ENCODE measurements at regions of chr2 and their contacts with region 1.

Region 1: GRCh38 chr2:12555012-12555645 is 161.6 kb upstream of the TRIB2 start:
- DNase-seq: peak; percentile 52
- H3K4me3 Mint-ChIP-seq: peak overlapping the region; percentile 5
- H3K27ac Mint-ChIP-seq: peak overlapping the region; percentile 86
- H3K4me1 Mint-ChIP-seq: peaks cover 35% of the 10 kb centered on the region
- H3K27me3 Mint-ChIP-seq: no peaks in the 10 kb centered on the region

Region 2: DNA sequence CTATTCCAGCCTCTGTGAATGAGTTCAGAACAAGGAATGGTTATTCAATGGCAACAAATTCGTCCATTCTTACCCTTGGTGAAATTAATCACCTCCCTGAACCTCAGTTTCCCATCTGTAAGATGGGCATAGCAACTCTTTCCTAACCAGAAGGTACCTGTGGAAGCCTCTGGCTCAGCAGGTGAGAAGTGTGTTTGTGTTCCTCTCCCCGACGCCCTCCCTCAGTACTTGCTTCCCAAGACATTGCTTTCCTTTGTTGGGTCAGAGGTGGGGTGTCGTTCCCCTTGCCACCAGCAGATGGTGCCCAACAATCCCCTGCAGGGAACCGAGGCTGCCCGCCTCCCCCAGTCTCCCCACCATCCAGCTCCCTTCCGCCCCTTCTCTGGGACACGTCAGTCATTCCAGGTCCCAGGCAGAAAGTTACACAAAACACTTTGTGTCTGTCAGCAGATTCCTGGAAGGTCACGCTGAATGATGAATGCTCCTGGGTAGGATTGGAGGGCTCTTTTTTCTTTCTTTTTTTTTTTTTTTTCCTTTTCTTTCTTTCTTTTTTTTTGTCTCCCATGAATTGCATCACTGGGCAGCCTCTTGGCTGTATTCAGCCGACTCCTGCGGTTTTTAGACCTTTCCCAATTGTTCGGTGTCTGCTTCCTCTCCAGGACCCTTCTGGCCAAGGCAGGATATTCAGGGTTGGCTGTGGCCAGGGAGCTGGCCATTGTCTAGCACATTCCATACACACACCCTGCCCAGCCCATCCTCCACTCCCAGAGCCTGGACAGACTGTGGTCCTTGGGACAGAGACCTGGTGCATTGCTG is 691.4 kb before region 1 on chr2:
- CTCF ChIA-PET with region 1: no interaction called
- intact Hi-C with region 1: loop called (anchors 10 kb)
- DNase-seq: peak; percentile 74
- H3K4me3 Mint-ChIP-seq: no peak overlapping the region
- H3K27ac Mint-ChIP-seq: no peak overlapping the region
- H3K4me1 Mint-ChIP-seq: peaks cover 22% of the 10 kb centered on the region
- H3K27me3 Mint-ChIP-seq: peaks cover 2% of the 10 kb centered on the region

Region 3: GRCh38 chr2:12293874-12294273 is 261.3 kb before region 1 on chr2:
- CTCF ChIA-PET with region 1: no interaction called
- intact Hi-C with region 1: loop called (anchors 2 kb)
- DNase-seq: peak; percentile 18
- H3K4me3 Mint-ChIP-seq: no peak overlapping the region
- H3K27ac Mint-ChIP-seq: peak overlapping the region; percentile 75
- H3K4me1 Mint-ChIP-seq: peaks cover 55% of the 10 kb centered on the region
- H3K27me3 Mint-ChIP-seq: peaks cover 6% of the 10 kb centered on the region

Region 4: GRCh38 chr2:12456293-12457151 is 98.6 kb before region 1 on chr2:
- CTCF ChIA-PET with region 1: no interaction called
- intact Hi-C with region 1: loop called (anchors 1 kb)
- DNase-seq: peak; percentile 79
- H3K4me3 Mint-ChIP-seq: peak overlapping the region; percentile 63
- H3K27ac Mint-ChIP-seq: peak overlapping the region; percentile 86
- H3K4me1 Mint-ChIP-seq: peaks cover 36% of the 10 kb centered on the region
- H3K27me3 Mint-ChIP-seq: no peaks in the 10 kb centered on the region

Region 5: DNA sequence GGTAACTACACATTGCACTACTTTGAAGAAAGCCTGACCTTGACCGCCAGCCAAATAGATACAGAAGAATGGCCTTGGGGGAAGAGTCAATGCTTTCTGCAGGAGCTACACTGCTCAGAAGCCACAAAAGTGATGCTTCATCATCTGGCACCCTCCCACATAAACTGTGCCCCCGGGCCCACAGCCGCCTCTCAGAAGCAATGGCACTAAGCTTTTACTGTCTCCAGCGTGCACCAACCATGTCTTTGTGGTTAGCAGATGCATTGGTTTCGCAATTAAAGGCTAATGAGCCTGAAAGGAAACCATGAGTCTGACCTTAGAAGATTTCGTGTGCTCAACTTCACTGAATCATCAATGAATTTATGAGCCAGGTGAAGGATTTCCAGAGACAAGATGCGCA is 47.8 kb before region 1 on chr2:
- CTCF ChIA-PET with region 1: interaction called, 4 read pairs
- intact Hi-C with region 1: loop called (anchors 1 kb)
- DNase-seq: peak; percentile 76
- H3K4me3 Mint-ChIP-seq: no peak overlapping the region
- H3K27ac Mint-ChIP-seq: no peak overlapping the region
- H3K4me1 Mint-ChIP-seq: peaks cover 68% of the 10 kb centered on the region
- H3K27me3 Mint-ChIP-seq: no peaks in the 10 kb centered on the region

Region 6: DNA sequence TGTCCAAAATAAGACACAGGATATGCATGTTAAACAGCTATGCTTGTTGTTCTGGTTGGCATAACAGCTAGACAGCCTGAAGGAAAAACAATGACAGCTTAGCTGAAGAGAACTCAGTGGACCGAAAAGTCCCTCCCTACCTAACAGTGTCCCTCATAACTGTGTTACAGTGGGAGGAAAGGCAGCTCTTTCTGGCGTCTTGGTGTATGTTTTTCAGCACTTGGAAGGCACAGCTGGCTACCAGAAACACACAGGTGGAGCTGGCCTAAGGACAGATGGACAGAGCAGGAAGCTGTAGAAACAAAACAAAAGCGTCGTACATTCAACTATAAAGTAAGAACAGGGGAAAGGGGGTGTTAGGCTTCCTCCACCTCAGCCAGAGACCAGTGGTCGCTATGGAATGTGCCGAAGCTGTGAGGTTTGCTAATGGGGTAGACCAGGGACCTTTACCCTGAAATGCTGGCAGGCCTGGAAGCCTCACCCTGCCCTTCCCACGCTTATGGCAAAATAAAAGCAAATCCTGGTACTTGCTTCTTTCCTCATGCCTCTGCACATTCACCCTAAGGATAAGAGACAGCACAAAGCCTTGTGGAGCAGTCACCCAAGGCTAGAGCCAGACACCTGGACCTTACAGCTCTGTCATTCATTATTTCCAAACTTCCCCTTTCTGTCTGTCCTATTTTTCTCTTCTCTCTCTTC is 58.2 kb after region 1 on chr2:
- CTCF ChIA-PET with region 1: no interaction called
- intact Hi-C with region 1: no loop called
- DNase-seq: no peak
- H3K4me3 Mint-ChIP-seq: no peak overlapping the region
- H3K27ac Mint-ChIP-seq: no peak overlapping the region
- H3K4me1 Mint-ChIP-seq: peaks cover 8% of the 10 kb centered on the region
- H3K27me3 Mint-ChIP-seq: no peaks in the 10 kb centered on the region

Region 7: GRCh38 chr2:12709207-12709522 is 154.0 kb after region 1 on chr2:
- CTCF ChIA-PET with region 1: interaction called, 3 read pairs
- intact Hi-C with region 1: loop called (anchors 1 kb)
- DNase-seq: peak; percentile 55
- H3K4me3 Mint-ChIP-seq: no peak overlapping the region
- H3K27ac Mint-ChIP-seq: peak overlapping the region; percentile 11
- H3K4me1 Mint-ChIP-seq: peaks cover 44% of the 10 kb centered on the region
- H3K27me3 Mint-ChIP-seq: no peaks in the 10 kb centered on the region

Region 8: DNA sequence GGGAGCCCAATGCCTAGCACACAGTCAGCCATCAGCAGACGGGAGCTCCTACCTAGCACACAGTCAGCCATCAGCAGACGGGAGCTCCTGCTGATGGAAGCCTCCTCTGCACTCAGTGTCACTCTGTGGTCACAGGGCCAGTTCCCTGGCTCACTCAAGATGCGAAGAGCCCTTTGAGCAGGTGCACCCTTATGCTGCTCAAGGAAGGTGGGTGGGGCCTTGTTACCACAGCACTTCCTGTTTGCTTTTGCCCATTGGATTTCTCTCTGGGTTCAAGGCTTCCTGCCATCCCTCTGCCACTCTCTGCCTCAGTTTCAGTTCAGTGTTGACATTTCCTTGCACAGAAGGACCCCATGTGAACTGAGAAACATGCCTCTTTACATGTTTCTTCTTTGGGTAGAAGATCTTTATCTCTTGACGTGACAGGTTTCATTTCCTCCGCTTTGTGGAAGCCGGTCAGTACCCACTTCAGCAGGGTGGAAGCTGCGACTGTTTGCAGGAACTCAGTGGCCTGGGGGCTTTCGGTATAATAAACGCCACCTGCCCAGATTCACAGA is 173.2 kb after region 1 on chr2:
- CTCF ChIA-PET with region 1: no interaction called
- intact Hi-C with region 1: no loop called
- DNase-seq: peak; percentile 78
- H3K4me3 Mint-ChIP-seq: peak overlapping the region; percentile 56
- H3K27ac Mint-ChIP-seq: peak overlapping the region; percentile 48
- H3K4me1 Mint-ChIP-seq: peaks cover 79% of the 10 kb centered on the region
- H3K27me3 Mint-ChIP-seq: no peaks in the 10 kb centered on the region

Measured in activated naive CD4-positive, alpha-beta T cell treated with anti-CD3 and anti-CD28 coated beads for 36 hours (primary cell).